Sigmoid colon (tissue), 7 donors: ENCODE measurements at regions of chr7 and their contacts with region 1.

Region 1: GRCh38 chr7:116258734-116259133 is 48.4 kb downstream of the TES start:
- DNase-seq: no peak
- H3K4me3 ChIP-seq: no peak overlapping the region
- H3K27ac ChIP-seq: peak overlapping the region; percentile 52 to 70 (median 60)
- H3K4me1 ChIP-seq: peaks cover 0 to 45% (median 17%) of the 10 kb centered on the region in 4 donors
- H3K27me3 ChIP-seq: no peaks in the 10 kb centered on the region
- CTCF ChIP-seq: peak; percentile 69 to 88 (median 78)
- EP300 ChIP-seq: no peak
- POLR2A ChIP-seq: no peak

Region 2: DNA sequence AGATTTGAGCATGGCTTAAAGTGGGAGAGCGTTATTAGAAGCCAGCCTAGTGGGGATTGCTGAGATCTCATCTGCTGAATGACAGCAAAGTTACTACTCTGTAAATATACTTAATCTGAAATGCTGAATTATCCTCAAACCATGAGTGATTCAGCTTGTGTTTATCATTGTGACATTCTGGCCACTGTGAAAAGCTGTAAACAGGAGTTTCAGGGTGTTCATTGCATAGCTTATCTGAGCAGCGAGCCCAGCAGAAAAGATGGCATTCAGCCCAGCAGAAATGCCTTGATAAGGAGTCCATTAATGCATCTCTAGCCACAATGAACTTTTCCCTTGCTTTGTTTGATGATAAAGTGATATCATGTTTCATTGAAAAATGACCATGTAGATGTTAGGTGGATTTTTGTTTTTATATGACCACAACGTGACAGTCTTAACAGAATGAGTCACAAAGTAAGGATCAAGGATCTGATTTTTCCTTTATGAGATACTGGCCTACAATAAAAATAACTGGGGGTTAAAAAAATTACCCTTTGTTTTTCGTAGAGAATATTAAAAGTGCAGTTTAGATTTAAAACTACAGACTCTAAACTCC is 40.6 kb before region 1 on chr7:
- intact Hi-C with region 1: no loop called
- DNase-seq: no peak
- H3K4me3 ChIP-seq: peak overlapping the region in 1 of 4 donors; percentile 3
- H3K27ac ChIP-seq: peak overlapping the region in 3 of 4 donors; percentile 93 to 97 (median 96)
- H3K4me1 ChIP-seq: peaks cover 0 to 97% (median 76%) of the 10 kb centered on the region in 4 donors
- H3K27me3 ChIP-seq: no peaks in the 10 kb centered on the region
- CTCF ChIP-seq: no peak
- EP300 ChIP-seq: no peak
- POLR2A ChIP-seq: no peak

Region 3: DNA sequence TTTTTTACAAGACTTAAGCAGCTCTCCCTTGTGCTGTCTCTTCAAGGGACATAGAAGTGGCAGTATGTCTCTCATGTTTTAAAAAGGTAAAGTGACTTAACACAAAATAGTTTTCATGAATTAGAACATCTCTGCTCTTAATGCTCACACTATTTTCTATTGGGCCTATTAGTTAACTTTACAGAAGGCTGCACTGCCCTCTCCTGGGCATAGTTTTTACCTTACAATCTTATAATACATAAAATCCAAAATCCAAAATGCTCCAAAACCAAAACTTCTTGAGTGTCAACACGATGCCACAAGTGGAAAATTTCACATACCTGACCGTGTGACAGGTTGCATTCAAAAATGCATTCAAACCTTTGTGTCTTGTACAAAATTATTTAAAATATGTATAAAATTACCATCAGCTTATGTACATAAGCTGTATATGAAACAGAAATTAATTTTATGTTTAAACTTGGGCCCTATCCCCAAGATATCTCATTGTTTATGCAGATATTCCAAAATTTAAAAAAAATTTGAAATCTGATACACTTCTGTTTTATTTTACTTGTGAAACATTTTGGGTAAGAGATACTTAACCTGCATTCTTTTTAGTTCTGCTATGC is 22.6 kb before region 1 on chr7:
- intact Hi-C with region 1: no loop called
- DNase-seq: no peak
- H3K4me3 ChIP-seq: peak overlapping the region; percentile 6 to 43 (median 39)
- H3K27ac ChIP-seq: peak overlapping the region in 3 of 4 donors; percentile 93 to 97 (median 96)
- H3K4me1 ChIP-seq: peaks cover 0 to 96% (median 68%) of the 10 kb centered on the region in 4 donors
- H3K27me3 ChIP-seq: no peaks in the 10 kb centered on the region
- CTCF ChIP-seq: peak; percentile 46 to 67 (median 64)
- EP300 ChIP-seq: no peak
- POLR2A ChIP-seq: no peak

Region 4: GRCh38 chr7:116525913-116526861 is 267.5 kb after region 1 on chr7:
- intact Hi-C with region 1: loop called (anchors 1 kb)
- DNase-seq: peak; percentile 93
- H3K4me3 ChIP-seq: peak overlapping the region; percentile 69 to 89 (median 80)
- H3K27ac ChIP-seq: peak overlapping the region; percentile 94 to 99 (median 98)
- H3K4me1 ChIP-seq: peaks cover 0 to 40% (median 24%) of the 10 kb centered on the region in 4 donors
- H3K27me3 ChIP-seq: no peaks in the 10 kb centered on the region
- CTCF ChIP-seq: peak in 3 of 4 experiments; percentile 14 to 88 (median 42)
- EP300 ChIP-seq: no peak
- POLR2A ChIP-seq: peak in 1 of 2 donors; percentile 63

Region 5: DNA sequence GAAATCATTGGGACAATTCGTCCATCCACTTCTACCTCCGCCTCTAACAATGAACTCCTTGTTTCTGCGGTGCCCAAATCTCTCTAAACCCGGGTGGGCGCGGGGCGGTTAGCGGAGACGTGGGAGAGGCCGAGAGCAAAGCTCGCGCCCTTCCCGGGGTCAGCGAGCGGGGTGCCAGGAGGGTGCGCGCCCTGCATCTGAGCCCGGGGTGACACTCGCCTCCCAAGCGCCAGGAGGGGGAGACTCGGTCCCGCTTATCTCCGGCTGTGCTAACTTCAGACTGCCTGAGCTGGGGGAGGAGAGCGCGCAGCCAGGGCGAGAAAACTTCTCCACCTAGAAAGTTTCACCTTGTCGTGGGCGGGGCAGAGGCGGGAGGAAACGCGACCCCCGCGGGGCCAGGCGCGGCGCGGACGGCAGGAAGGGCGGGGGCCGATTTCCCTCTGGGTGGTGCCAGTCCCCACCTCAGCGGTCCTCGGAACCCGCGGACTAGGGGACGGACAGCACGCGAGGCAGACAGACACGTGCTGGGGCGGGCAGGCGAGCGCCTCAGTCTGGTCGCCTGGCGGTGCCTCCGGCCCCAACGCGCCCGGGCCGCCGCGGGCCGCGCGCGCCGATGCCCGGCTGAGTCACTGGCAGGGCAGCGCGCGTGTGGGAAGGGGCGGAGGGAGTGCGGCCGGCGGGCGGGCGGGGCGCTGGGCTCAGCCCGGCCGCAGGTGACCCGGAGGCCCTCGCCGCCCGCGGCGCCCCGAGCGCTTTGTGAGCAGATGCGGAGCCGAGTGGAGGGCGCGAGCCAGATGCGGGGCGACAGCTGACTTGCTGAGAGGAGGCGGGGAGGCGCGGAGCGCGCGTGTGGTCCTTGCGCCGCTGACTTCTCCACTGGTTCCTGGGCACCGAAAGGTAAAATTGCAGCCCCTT is 413.2 kb after region 1 on chr7 and contains the start of gene MET:
- intact Hi-C with region 1: loop called (anchors 10 kb)
- DNase-seq: peak; percentile 85
- H3K4me3 ChIP-seq: peak within 1 kb of the TSS; percentile 51 to 74 (median 67)
- H3K27ac ChIP-seq: peak within 1 kb of the TSS; percentile 80 to 83 (median 82)
- H3K4me1 ChIP-seq: peaks cover 0 to 26% (median 10%) of the 10 kb centered on the region in 4 donors
- H3K27me3 ChIP-seq: no peaks in the 10 kb centered on the region
- CTCF ChIP-seq: peak; percentile 47 to 58 (median 53)
- EP300 ChIP-seq: no peak
- POLR2A ChIP-seq: no peak
- total RNA-seq, gene MET: 15.9 to 21.6 (median 18.6) TPM